GM12878 (cell line): ENCODE measurements at regions of chr2 and their contacts with region 1.

Region 1: DNA sequence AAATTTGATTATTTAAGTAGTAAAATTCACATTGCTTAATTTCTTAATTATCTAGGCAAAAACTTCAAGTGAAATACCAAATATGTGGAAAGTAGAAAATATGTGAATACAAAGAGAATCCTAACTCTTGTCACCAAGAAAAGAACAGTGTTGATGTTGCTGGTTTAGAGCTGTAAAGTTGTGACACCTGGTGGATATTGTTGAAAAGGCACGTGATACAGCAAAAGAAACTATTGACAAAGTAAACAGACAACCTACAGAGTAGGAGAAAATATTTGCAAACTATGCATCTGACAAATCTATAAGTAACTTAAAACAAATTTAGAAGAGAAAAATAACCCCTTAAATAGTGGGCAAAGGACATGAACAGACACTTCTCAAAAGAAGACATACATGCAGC is 25.6 kb upstream of the ZC3H15 start:
- DNase-seq: no peak
- ATAC-seq: peak; percentile 87
- H3K4me3 ChIP-seq: no peak overlapping the region
- H3K27ac ChIP-seq: no peak overlapping the region
- H3K4me1 ChIP-seq: no peaks in the 10 kb centered on the region
- H3K27me3 ChIP-seq: no peaks in the 10 kb centered on the region
- CTCF ChIP-seq: peak; percentile 41 to 57 (median 48); a peak in 5 of 6 replicates
- EP300 ChIP-seq: no peak
- POLR2A ChIP-seq: no peak
- RAD21 ChIP-seq: peak; percentile 83

Region 2: DNA sequence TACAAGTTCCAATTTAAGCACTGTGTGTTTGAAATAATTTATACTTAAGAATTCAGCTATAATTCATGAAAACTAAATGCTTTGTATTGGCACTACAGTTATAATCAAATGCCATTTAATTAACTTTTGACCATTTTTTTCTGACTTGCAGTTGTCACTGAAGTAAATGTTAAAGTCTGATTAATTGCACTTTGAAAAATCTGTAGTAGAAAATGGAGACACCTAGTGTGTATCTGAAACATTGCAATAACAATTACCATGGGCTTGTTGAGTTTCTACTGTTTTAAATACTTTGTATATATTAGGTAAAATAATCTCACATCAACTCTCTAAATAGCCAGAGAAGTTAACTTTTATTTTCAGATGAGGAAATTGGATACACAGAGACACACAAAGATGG is 1180.5 kb before region 1 on chr2:
- CTCF ChIA-PET with region 1: no interaction called
- POLR2A ChIA-PET with region 1: no interaction called
- RAD21 ChIA-PET with region 1: no interaction called
- SMC1A ChIA-PET with region 1: no interaction called
- in situ Hi-C with region 1: no loop called
- intact Hi-C with region 1: loop called (anchors 10 kb)
- DNase-seq: no peak
- ATAC-seq: peak; percentile 44; the same call in 1 of the 3 replicates
- H3K4me3 ChIP-seq: no peak overlapping the region
- H3K27ac ChIP-seq: no peak overlapping the region
- H3K4me1 ChIP-seq: no peaks in the 10 kb centered on the region
- H3K27me3 ChIP-seq: no peaks in the 10 kb centered on the region
- CTCF ChIP-seq: peak; percentile 26 to 52 (median 42); a peak in 3 of 6 replicates
- EP300 ChIP-seq: no peak
- POLR2A ChIP-seq: no peak
- RAD21 ChIP-seq: peak; percentile 52

Region 3: GRCh38 chr2:185522472-185522871 is 938.0 kb before region 1 on chr2:
- CTCF ChIA-PET with region 1: no interaction called
- POLR2A ChIA-PET with region 1: no interaction called
- RAD21 ChIA-PET with region 1: no interaction called
- SMC1A ChIA-PET with region 1: no interaction called
- in situ Hi-C with region 1: no loop called
- intact Hi-C with region 1: loop called (anchors 5 kb)
- DNase-seq: no peak
- ATAC-seq: no peak; the same call in 2 of the 3 replicates
- H3K4me3 ChIP-seq: no peak overlapping the region
- H3K27ac ChIP-seq: no peak overlapping the region
- H3K4me1 ChIP-seq: no peaks in the 10 kb centered on the region
- H3K27me3 ChIP-seq: no peaks in the 10 kb centered on the region
- CTCF ChIP-seq: peak in 1 of 3 experiments; percentile 16; a peak in 2 of 6 replicates
- EP300 ChIP-seq: no peak
- POLR2A ChIP-seq: no peak
- RAD21 ChIP-seq: no peak

Region 4: GRCh38 chr2:185628985-185629384 is 831.5 kb before region 1 on chr2:
- CTCF ChIA-PET with region 1: interaction called, 9 read pairs
- POLR2A ChIA-PET with region 1: no interaction called
- RAD21 ChIA-PET with region 1: interaction called, 8 read pairs
- SMC1A ChIA-PET with region 1: interaction called, 6 read pairs
- in situ Hi-C with region 1: loop called (anchors 25 kb)
- intact Hi-C with region 1: loop called (anchors 1 kb)
- DNase-seq: no peak
- ATAC-seq: peak; percentile 86
- H3K4me3 ChIP-seq: no peak overlapping the region
- H3K27ac ChIP-seq: no peak overlapping the region
- H3K4me1 ChIP-seq: no peaks in the 10 kb centered on the region
- H3K27me3 ChIP-seq: no peaks in the 10 kb centered on the region
- CTCF ChIP-seq: peak; percentile 32 to 39 (median 32); a peak in 5 of 6 replicates
- EP300 ChIP-seq: no peak
- POLR2A ChIP-seq: no peak
- RAD21 ChIP-seq: peak; percentile 44

Region 5: GRCh38 chr2:185738679-185739472 is 721.6 kb before region 1 on chr2 and contains the start of gene FSIP2:
- CTCF ChIA-PET with region 1: interaction called, 3 read pairs
- POLR2A ChIA-PET with region 1: no interaction called
- RAD21 ChIA-PET with region 1: no interaction called
- SMC1A ChIA-PET with region 1: no interaction called
- in situ Hi-C with region 1: no loop called
- intact Hi-C with region 1: loop called (anchors 10 kb)
- DNase-seq: no peak
- ATAC-seq: peak; percentile 98
- H3K4me3 ChIP-seq: no peak within 1 kb of the TSS
- H3K27ac ChIP-seq: no peak within 1 kb of the TSS
- H3K4me1 ChIP-seq: no peaks in the 10 kb centered on the region
- H3K27me3 ChIP-seq: no peaks in the 10 kb centered on the region; a peak in 1 of 4 replicates
- CTCF ChIP-seq: peak; percentile 68 to 89 (median 77)
- EP300 ChIP-seq: no peak
- POLR2A ChIP-seq: no peak
- RAD21 ChIP-seq: peak; percentile 73
- polyA plus RNA-seq, gene FSIP2: 0.04 to 0.13 TPM

Region 6: DNA sequence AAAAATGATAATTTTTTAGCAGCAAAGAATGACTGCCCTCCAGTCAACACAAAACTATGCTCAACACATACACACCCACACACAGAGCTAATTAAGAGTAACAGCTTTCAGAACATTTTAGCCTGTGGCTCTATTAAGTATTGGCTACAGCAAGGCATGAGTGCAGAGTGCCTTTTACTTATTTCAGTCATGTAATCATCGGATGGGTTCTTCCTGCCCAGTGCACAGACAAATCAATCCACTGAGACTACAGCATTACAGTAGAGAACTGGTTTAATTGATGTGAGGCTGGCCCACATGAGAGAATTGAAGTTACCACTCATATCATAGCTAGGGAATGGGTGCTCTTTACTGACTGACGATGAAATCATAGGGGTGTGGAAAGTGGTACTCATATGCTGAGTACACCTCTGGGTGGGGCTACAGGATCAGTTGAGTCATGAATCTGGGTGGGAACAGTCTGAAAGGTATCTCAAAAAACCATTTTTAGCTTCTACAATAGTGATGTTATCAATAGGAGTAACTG is 480.9 kb before region 1 on chr2:
- CTCF ChIA-PET with region 1: interaction called, 3 read pairs
- POLR2A ChIA-PET with region 1: no interaction called
- RAD21 ChIA-PET with region 1: interaction called, 3 read pairs
- SMC1A ChIA-PET with region 1: no interaction called
- in situ Hi-C with region 1: no loop called
- intact Hi-C with region 1: loop called (anchors 10 kb)
- DNase-seq: no peak
- ATAC-seq: peak; percentile 81
- H3K4me3 ChIP-seq: no peak overlapping the region
- H3K27ac ChIP-seq: no peak overlapping the region
- H3K4me1 ChIP-seq: no peaks in the 10 kb centered on the region
- H3K27me3 ChIP-seq: no peaks in the 10 kb centered on the region
- CTCF ChIP-seq: no peak; a peak in 1 of 6 replicates
- EP300 ChIP-seq: no peak
- POLR2A ChIP-seq: no peak
- RAD21 ChIP-seq: peak; percentile 20; the same call in 1 of the 2 replicates

Region 7: GRCh38 chr2:186263673-186264250 is 196.7 kb before region 1 on chr2:
- CTCF ChIA-PET with region 1: interaction called, 9 read pairs
- POLR2A ChIA-PET with region 1: no interaction called
- RAD21 ChIA-PET with region 1: no interaction called
- SMC1A ChIA-PET with region 1: no interaction called
- in situ Hi-C with region 1: no loop called
- intact Hi-C with region 1: loop called (anchors 2 kb)
- DNase-seq: no peak
- ATAC-seq: no peak
- H3K4me3 ChIP-seq: no peak overlapping the region
- H3K27ac ChIP-seq: no peak overlapping the region
- H3K4me1 ChIP-seq: no peaks in the 10 kb centered on the region
- H3K27me3 ChIP-seq: no peaks in the 10 kb centered on the region
- CTCF ChIP-seq: no peak
- EP300 ChIP-seq: no peak
- POLR2A ChIP-seq: no peak
- RAD21 ChIP-seq: no peak

Region 8: GRCh38 chr2:186382932-186383331 is 77.5 kb before region 1 on chr2:
- CTCF ChIA-PET with region 1: no interaction called
- POLR2A ChIA-PET with region 1: no interaction called
- RAD21 ChIA-PET with region 1: no interaction called
- SMC1A ChIA-PET with region 1: no interaction called
- in situ Hi-C with region 1: no loop called
- intact Hi-C with region 1: no loop called
- DNase-seq: no peak
- ATAC-seq: no peak
- H3K4me3 ChIP-seq: no peak overlapping the region
- H3K27ac ChIP-seq: no peak overlapping the region
- H3K4me1 ChIP-seq: no peaks in the 10 kb centered on the region
- H3K27me3 ChIP-seq: no peaks in the 10 kb centered on the region
- CTCF ChIP-seq: no peak
- EP300 ChIP-seq: no peak
- POLR2A ChIP-seq: no peak
- RAD21 ChIP-seq: no peak

Region 9: DNA sequence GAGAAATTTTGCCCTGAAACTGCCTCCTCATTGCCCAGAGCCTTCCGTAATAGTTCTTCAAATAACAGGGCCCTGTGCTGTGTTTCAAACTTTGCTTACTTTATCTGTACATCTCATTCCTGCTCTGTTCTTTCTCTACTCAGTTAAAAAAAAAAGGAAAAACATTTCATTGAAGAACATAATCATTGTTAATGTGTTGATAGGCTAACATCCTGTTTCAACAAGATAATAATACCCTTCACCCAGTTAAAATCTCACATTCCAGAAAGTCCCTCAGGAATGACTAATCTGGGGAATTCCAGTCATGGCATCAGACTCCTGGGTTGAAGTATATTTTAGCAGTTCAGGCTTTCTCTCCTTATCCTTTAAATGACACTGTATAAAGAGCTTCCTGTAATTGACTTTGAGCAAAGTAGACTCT is 83.8 kb after region 1 on chr2:
- CTCF ChIA-PET with region 1: no interaction called
- POLR2A ChIA-PET with region 1: no interaction called
- RAD21 ChIA-PET with region 1: no interaction called
- SMC1A ChIA-PET with region 1: no interaction called
- in situ Hi-C with region 1: no loop called
- intact Hi-C with region 1: no loop called
- DNase-seq: no peak
- ATAC-seq: peak; percentile 30
- H3K4me3 ChIP-seq: no peak overlapping the region
- H3K27ac ChIP-seq: no peak overlapping the region
- H3K4me1 ChIP-seq: no peaks in the 10 kb centered on the region
- H3K27me3 ChIP-seq: no peaks in the 10 kb centered on the region
- CTCF ChIP-seq: no peak
- EP300 ChIP-seq: no peak
- POLR2A ChIP-seq: no peak
- RAD21 ChIP-seq: no peak